Activated CD4-positive, alpha-beta memory T cell treated with anti-CD3 and anti-CD28 coated beads for 36 hours (primary cell): ENCODE measurements at regions of chr10 and their contacts with region 1.

Region 1: GRCh38 chr10:122879339-122880273 is at the start of gene FAM24B:
- DNase-seq: peak; percentile 95
- H3K4me3 Mint-ChIP-seq: peak within 1 kb of the TSS; percentile 86
- H3K27ac Mint-ChIP-seq: peak within 1 kb of the TSS; percentile 82
- H3K4me1 Mint-ChIP-seq: peaks cover 52% of the 10 kb centered on the region
- H3K27me3 Mint-ChIP-seq: no peaks in the 10 kb centered on the region
- total RNA-seq, gene FAM24B: 7.2 to 8.1 TPM

Region 2: DNA sequence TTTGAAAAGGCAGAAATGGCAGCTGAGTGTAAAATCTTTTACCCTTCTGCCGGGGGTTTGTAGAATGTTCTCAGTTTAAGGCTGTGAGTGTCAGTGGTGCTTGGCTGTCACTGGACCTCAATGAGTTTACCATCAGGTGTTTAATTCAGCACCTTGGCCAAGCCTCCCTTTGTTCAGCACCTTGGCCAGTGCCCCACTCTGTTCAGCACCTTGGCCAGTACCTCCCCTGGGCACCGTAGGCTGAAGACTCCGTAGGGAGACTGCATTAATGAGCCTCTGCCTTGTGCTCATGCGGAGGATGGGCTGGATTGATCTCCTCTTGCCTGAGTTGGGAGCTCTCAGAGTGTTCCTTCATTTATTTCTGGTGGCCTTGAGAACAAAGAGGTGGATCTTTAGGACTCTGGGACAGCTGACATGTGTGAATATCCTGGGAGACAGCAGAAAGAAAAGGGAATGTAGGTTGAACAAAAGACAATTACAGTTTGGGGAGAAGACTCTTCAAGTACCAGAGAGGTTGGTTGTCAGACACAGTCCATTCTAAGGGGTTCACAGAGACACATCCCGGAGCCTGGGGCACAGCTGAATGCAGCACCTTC is 32.4 kb after region 1 on chr10:
- CTCF ChIA-PET with region 1: no interaction called
- POLR2A ChIA-PET with region 1: no interaction called
- intact Hi-C with region 1: no loop called
- DNase-seq: peak; percentile 73
- H3K4me3 Mint-ChIP-seq: no peak overlapping the region
- H3K27ac Mint-ChIP-seq: no peak overlapping the region
- H3K4me1 Mint-ChIP-seq: no peaks in the 10 kb centered on the region
- H3K27me3 Mint-ChIP-seq: peaks cover 7% of the 10 kb centered on the region

Region 3: GRCh38 chr10:122953827-122954730 is 74.5 kb after region 1 on chr10 and contains the start of gene C10orf88:
- CTCF ChIA-PET with region 1: no interaction called
- POLR2A ChIA-PET with region 1: interaction called, 3 read pairs
- intact Hi-C with region 1: loop called (anchors 1 kb)
- DNase-seq: peak; percentile 98
- H3K4me3 Mint-ChIP-seq: peak within 1 kb of the TSS; percentile 82
- H3K27ac Mint-ChIP-seq: peak within 1 kb of the TSS; percentile 80
- H3K4me1 Mint-ChIP-seq: peaks cover 30% of the 10 kb centered on the region
- H3K27me3 Mint-ChIP-seq: peaks cover 1% of the 10 kb centered on the region
- total RNA-seq, gene C10orf88: 8.3 to 9.2 TPM

Region 4: DNA sequence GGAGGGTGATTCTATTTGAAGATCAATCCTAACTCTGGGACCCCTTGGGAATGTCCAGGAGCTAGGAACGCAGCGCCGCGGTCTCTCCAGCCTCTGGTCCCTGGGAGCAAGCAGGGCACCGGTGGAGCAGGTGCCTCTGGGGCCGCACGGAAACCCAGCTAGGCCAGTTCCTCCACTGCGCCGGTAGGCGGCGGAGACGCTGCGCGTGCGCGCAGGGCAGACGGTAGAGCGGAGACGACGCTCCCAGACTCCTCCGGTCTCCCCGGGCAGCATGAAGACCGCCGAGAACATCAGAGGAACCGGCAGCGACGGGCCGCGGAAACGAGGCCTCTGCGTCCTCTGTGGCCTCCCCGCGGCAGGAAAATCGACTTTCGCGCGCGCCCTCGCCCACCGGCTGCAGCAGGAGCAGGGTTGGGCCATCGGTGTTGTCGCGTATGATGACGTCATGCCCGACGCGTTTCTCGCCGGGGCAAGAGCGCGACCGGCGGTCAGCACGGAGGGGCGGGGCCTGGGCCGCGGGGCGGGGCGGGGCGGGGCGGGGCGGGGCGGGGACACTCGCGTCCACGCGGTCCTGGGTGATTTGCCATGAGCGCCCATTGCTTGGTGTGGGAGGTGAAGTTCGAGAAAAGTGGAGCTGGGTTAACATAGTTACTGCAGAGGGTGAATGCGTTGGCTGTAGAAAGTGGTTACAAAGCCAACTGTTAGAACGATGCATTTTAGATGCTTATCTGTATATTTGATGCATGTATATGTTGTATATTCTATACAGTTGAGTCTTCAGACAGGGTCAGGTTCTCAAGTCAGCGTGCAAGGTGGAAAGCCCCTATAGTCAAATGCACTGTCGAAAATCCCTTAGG is 100.8 kb after region 1 on chr10 and contains the start of gene PSTK:
- CTCF ChIA-PET with region 1: no interaction called
- POLR2A ChIA-PET with region 1: interaction called, 4 read pairs
- intact Hi-C with region 1: loop called (anchors 1 kb)
- DNase-seq: peak; percentile 91
- H3K4me3 Mint-ChIP-seq: peak within 1 kb of the TSS; percentile 82
- H3K27ac Mint-ChIP-seq: peak within 1 kb of the TSS; percentile 94
- H3K4me1 Mint-ChIP-seq: peaks cover 16% of the 10 kb centered on the region
- H3K27me3 Mint-ChIP-seq: no peaks in the 10 kb centered on the region
- total RNA-seq, gene PSTK: 3.2 to 3.4 TPM

Region 5: DNA sequence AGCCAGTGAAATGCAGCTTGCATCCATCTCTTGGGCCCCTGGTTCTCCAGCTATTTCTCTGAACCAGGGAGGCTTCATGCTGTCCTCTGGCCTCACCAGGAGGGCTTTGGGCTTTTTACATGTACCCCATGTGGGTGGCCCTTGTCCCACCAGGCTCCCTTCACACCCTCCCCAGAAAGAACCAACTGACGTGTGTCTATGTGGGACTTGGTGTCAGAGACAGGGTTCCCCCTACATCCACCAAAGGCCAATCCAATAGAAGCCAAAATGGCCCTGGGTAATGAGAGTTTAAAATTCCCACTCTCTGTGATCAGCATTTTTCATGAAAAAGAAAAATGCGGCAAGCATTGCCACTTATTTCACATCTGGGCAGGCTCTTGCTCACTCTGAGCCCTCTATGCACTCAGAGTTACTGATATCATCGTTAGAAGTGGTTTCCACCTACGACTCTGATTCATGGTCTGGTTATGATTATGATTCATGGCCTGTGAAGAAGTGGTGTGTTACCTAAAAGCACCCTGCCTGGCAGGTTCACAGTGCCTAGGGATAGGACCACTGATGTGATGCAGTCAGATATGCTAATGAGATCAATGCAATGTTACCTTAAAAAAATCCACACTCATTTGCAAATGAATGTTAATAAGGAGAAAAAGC is 408.1 kb after region 1 on chr10:
- CTCF ChIA-PET with region 1: no interaction called
- POLR2A ChIA-PET with region 1: no interaction called
- intact Hi-C with region 1: loop called (anchors 2 kb)
- DNase-seq: peak; percentile 69
- H3K4me3 Mint-ChIP-seq: no peak overlapping the region
- H3K27ac Mint-ChIP-seq: peak overlapping the region; percentile 54
- H3K4me1 Mint-ChIP-seq: peaks cover 20% of the 10 kb centered on the region
- H3K27me3 Mint-ChIP-seq: peaks cover 8% of the 10 kb centered on the region

Region 6: GRCh38 chr10:124387540-124387874 is 1507.9 kb after region 1 on chr10:
- CTCF ChIA-PET with region 1: no interaction called
- POLR2A ChIA-PET with region 1: no interaction called
- intact Hi-C with region 1: no loop called
- DNase-seq: no peak
- H3K4me3 Mint-ChIP-seq: no peak overlapping the region
- H3K27ac Mint-ChIP-seq: peak overlapping the region; percentile 49
- H3K4me1 Mint-ChIP-seq: peaks cover 3% of the 10 kb centered on the region
- H3K27me3 Mint-ChIP-seq: peaks cover 4% of the 10 kb centered on the region